ENCODE measurements at regions of chr7 and their contacts with region 1.

Region 1: GRCh38 chr7:100101016-100101862 is at the starts of genes AP4M1 and MCM7:
- DNase-seq: peak; percentile 99 to 100
- ATAC-seq: peak; percentile 97
- H3K4me3 ChIP-seq: peak within 1 kb of the TSS; percentile 81 to 88
- H3K27ac ChIP-seq: peak within 1 kb of the TSS in 1 of 2 donors; percentile 49
- H3K4me1 ChIP-seq: no peaks in the 10 kb centered on the region
- H3K27me3 ChIP-seq: no peaks in the 10 kb centered on the region
- total RNA-seq, gene AP4M1: 14.9 to 20.5 TPM
- total RNA-seq, gene MCM7: 27.1 to 45.8 TPM

Region 2: GRCh38 chr7:100119062-100119700 is 17.9 kb after region 1 on chr7 and contains the starts of genes CNPY4 and TAF6:
- intact Hi-C with region 1: loop called in 1 of 2 experiments (anchors 2 kb)
- DNase-seq: peak; percentile 97 to 99
- ATAC-seq: peak; percentile 97
- H3K4me3 ChIP-seq: peak within 1 kb of the TSS; percentile 71 to 73
- H3K27ac ChIP-seq: peak within 1 kb of the TSS in 1 of 2 donors; percentile 29
- H3K4me1 ChIP-seq: peaks cover 0 to 2% of the 10 kb centered on the region in 2 donors
- H3K27me3 ChIP-seq: no peaks in the 10 kb centered on the region
- total RNA-seq, gene CNPY4: 14.0 to 29.5 TPM
- total RNA-seq, gene TAF6: 31.7 to 38.7 TPM

Region 3: GRCh38 chr7:100126931-100127865 is 26.0 kb after region 1 on chr7 and contains the start of gene MBLAC1:
- intact Hi-C with region 1: loop called in 1 of 2 experiments (anchors 2 kb)
- DNase-seq: peak; percentile 92 to 95
- ATAC-seq: peak; percentile 97
- H3K4me3 ChIP-seq: peak within 1 kb of the TSS; percentile 50 to 80
- H3K27ac ChIP-seq: peak within 1 kb of the TSS in 1 of 2 donors; percentile 83
- H3K4me1 ChIP-seq: no peaks in the 10 kb centered on the region
- H3K27me3 ChIP-seq: no peaks in the 10 kb centered on the region
- total RNA-seq, gene MBLAC1: 1.8 to 1.9 TPM

Measured in aorta (tissue), 5 donors.